ENCODE measurements at regions of chr1 and their contacts with region 1.

Region 1: GRCh38 chr1:180278596-180279395 is 48.7 kb downstream of the LHX4 start:
- DNase-seq: no peak
- H3K4me3 ChIP-seq: no peak overlapping the region
- H3K27ac ChIP-seq: no peak overlapping the region
- H3K4me1 ChIP-seq: no peaks in the 10 kb centered on the region
- H3K27me3 ChIP-seq: no peaks in the 10 kb centered on the region
- CTCF ChIP-seq: no peak
- POLR2A ChIP-seq: no peak

Region 2: DNA sequence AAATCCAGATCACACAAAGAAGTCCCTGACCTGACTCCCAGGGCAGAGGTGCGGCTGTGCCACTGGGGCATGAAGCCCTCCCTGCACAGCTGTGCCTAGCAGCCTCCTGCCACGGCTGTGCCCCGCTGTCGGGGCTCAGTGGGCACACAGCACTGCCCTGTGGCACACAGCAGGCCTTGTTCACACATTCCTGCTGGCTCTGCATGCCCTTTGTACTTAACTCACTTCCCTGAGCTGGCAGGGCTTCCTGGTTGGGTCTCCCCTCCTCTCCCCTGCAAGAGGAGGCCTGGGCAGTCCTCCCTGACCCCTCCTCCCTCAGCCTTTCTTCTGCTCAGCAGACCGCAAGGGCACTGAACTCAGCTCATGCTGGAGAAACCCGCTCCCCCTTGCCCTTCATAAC is 34.0 kb before region 1 on chr1:
- intact Hi-C with region 1: loop called (anchors 1 kb)
- DNase-seq: no peak
- H3K4me3 ChIP-seq: no peak overlapping the region
- H3K27ac ChIP-seq: no peak overlapping the region
- H3K4me1 ChIP-seq: no peaks in the 10 kb centered on the region
- H3K27me3 ChIP-seq: peaks cover 0 to 35% of the 10 kb centered on the region in 2 donors
- CTCF ChIP-seq: no peak
- POLR2A ChIP-seq: no peak

Region 3: GRCh38 chr1:180778782-180779398 is 500.1 kb after region 1 on chr1:
- intact Hi-C with region 1: no loop called
- DNase-seq: no peak
- H3K4me3 ChIP-seq: no peak overlapping the region
- H3K27ac ChIP-seq: no peak overlapping the region
- H3K4me1 ChIP-seq: no peaks in the 10 kb centered on the region
- H3K27me3 ChIP-seq: no peaks in the 10 kb centered on the region
- CTCF ChIP-seq: no peak
- POLR2A ChIP-seq: no peak